ENCODE measurements at regions of chr3 and their contacts with region 1.

Region 1: GRCh38 chr3:157088601-157089454 is 71.1 kb downstream of the CCNL1 start:
- DNase-seq: peak; percentile 93 to 97
- ATAC-seq: peak; percentile 94
- H3K4me3 ChIP-seq: peak overlapping the region; percentile 52
- H3K27ac ChIP-seq: peak overlapping the region; percentile 93 to 98
- H3K4me1 ChIP-seq: peaks cover 23% of the 10 kb centered on the region
- CTCF ChIP-seq: no peak
- EP300 ChIP-seq: no peak
- POLR2A ChIP-seq: peak; percentile 84
- RAD21 ChIP-seq: no peak; a peak in 2 of 5 replicates

Region 2: DNA sequence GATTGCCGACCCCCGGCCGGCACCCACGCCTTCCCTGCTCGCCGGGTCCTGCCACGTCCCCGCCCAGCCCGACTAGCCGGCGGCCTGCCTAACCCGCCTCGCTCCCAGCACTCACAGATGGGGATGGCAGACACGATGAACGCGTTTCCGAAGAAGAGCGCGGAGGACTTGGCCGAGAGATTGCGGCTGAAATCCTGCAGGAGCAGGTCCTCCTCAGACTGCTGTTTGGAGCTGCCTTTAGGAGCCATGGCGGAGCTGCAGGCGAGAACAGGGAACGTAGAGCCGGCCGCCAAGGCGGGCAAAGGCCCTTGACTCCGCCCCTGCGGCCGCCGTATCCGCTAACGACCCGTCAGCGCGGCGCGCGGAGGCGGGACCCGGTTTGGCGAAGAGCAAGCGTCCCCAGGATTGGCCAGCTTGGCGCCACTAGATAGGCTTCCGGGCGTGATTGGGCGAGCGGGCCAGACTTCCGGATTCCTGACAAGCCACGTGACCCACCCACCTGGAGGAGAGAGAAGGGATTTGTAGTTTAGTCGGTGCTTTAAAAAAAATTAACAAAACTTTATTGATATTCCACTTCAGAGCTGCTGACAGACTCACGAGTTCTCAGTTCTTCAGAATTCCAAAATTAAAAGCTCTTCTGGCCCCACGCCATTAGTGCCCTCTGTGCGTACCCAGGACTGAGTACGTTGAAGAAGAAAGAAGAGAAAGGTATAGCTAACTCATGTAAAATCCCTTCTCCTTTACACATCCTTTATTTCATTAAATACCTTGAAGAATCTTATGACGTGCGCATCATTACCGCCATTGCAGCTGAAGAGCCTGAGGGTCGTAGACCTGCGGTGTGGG is 533.8 kb before region 1 on chr3 and contains the start of gene SSR3:
- CTCF ChIA-PET with region 1: interaction called, 3 read pairs
- POLR2A ChIA-PET with region 1: interaction called, 26 read pairs
- DNase-seq: peak; percentile 92 to 99
- ATAC-seq: peak; percentile 99 to 100
- H3K4me3 ChIP-seq: peak within 1 kb of the TSS; percentile 61
- H3K27ac ChIP-seq: peak within 1 kb of the TSS; percentile 83 to 93
- H3K4me1 ChIP-seq: peaks cover 16% of the 10 kb centered on the region; the same call in 2 of the 3 replicates
- CTCF ChIP-seq: no peak
- EP300 ChIP-seq: no peak
- POLR2A ChIP-seq: peak; percentile 76
- RAD21 ChIP-seq: no peak
- polyA plus RNA-seq, gene SSR3: 187 and 242 TPM in 2 replicates

Region 3: DNA sequence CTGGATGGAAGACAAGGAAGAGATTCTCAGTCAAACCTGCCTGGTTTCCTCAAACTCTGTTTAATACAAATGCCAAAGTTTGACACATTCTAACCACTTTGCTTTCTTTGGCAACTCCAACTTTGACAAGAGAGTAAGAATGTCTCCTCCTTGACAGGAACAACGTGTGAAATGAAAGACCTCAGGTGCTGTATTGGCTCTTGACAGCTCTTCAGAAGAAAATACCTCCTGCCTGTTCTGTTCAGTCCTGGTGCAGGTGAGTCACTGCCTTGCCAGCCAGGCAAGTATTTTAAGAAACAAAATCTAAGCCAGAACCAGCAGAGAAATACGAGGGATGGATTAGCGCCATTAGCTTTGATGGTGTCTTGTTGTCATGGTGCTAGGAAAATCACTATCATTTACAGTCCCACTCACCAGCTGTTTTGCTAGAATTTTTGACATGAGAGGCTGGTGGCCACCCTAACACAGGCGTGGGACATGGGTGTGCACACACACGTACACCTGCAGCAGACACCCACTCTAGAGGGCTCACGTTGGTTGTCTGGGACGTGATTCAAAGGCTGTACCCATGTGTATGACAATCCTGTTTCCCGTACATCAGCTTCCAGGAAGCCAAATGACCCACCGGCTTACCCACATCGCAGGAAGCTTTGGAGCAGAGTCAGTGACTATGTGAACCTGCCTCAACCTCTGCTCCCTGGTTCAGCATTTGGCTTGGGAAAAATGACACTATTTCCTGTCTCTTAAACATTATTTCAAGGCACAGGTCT is 10.7 kb after region 1 on chr3:
- CTCF ChIA-PET with region 1: interaction called, 13 read pairs
- POLR2A ChIA-PET with region 1: interaction called, 13 read pairs
- DNase-seq: no peak
- ATAC-seq: no peak
- H3K4me3 ChIP-seq: no peak overlapping the region
- H3K27ac ChIP-seq: no peak overlapping the region
- H3K4me1 ChIP-seq: peaks cover 4% of the 10 kb centered on the region; the same call in 1 of the 3 replicates
- CTCF ChIP-seq: no peak
- EP300 ChIP-seq: no peak
- POLR2A ChIP-seq: no peak
- RAD21 ChIP-seq: no peak

Region 4: DNA sequence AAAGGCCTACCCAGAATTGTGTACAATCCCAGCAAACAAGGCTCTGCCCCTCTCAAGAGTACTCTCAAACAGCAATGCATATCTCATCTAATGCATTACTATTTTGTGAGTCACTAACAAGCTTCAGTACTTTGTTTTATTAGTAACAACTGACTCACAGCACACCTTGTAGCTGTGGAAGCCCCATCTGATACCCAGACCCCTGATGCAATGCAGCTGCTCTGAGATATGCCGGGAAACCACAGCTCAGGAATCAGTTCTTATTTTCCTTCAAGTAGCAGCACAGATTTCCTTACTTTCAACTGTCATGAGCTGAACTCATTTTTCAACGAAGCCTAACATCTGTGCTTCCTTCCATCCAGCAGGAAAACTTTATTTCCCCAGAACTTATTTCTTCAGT is 33.3 kb after region 1 on chr3:
- CTCF ChIA-PET with region 1: interaction called, 72 read pairs
- POLR2A ChIA-PET with region 1: interaction called, 69 read pairs
- DNase-seq: peak; percentile 39 to 60
- ATAC-seq: peak; percentile 79 to 80
- H3K4me3 ChIP-seq: no peak overlapping the region
- H3K27ac ChIP-seq: peak overlapping the region; percentile 59 to 64; a peak in 4 of 6 replicates
- H3K4me1 ChIP-seq: peaks cover 51% of the 10 kb centered on the region
- CTCF ChIP-seq: no peak
- EP300 ChIP-seq: no peak
- POLR2A ChIP-seq: no peak
- RAD21 ChIP-seq: no peak

Region 5: GRCh38 chr3:157130467-157131251 is 41.8 kb after region 1 on chr3:
- CTCF ChIA-PET with region 1: interaction called, 72 read pairs
- POLR2A ChIA-PET with region 1: interaction called, 69 read pairs
- DNase-seq: peak; percentile 75 to 85
- ATAC-seq: peak; percentile 60 to 68
- H3K4me3 ChIP-seq: peak overlapping the region; percentile 2; the same call in 1 of the 3 replicates
- H3K27ac ChIP-seq: peak overlapping the region; percentile 77 to 80
- H3K4me1 ChIP-seq: peaks cover 66% of the 10 kb centered on the region
- CTCF ChIP-seq: peak; percentile 83
- EP300 ChIP-seq: peak in 1 of 2 experiments; percentile 44; a peak in 1 of 5 replicates
- POLR2A ChIP-seq: no peak
- RAD21 ChIP-seq: peak; percentile 77 to 87

Region 6: GRCh38 chr3:157159762-157160657 is 71.2 kb after region 1 on chr3 and contains the start of gene CCNL1:
- CTCF ChIA-PET with region 1: interaction called, 4 read pairs
- POLR2A ChIA-PET with region 1: interaction called, 16 read pairs
- DNase-seq: peak; percentile 83 to 99
- ATAC-seq: peak; percentile 92 to 93
- H3K4me3 ChIP-seq: peak within 1 kb of the TSS; percentile 96
- H3K27ac ChIP-seq: peak within 1 kb of the TSS; percentile 98 to 99
- H3K4me1 ChIP-seq: peaks cover 40% of the 10 kb centered on the region
- CTCF ChIP-seq: no peak
- EP300 ChIP-seq: no peak
- POLR2A ChIP-seq: peak; percentile 95
- RAD21 ChIP-seq: no peak
- polyA plus RNA-seq, gene CCNL1: 130 and 170 TPM in 2 replicates

Region 7: GRCh38 chr3:157226173-157226847 is 137.5 kb after region 1 on chr3:
- CTCF ChIA-PET with region 1: no interaction called
- POLR2A ChIA-PET with region 1: no interaction called
- DNase-seq: no peak
- ATAC-seq: no peak
- H3K4me3 ChIP-seq: no peak overlapping the region
- H3K27ac ChIP-seq: no peak overlapping the region
- H3K4me1 ChIP-seq: 0 out of 3 replicates have a peak, but pooled peaks cover 3% of the 10 kb centered on the region
- CTCF ChIP-seq: no peak
- EP300 ChIP-seq: no peak
- POLR2A ChIP-seq: no peak
- RAD21 ChIP-seq: no peak

Region 8: DNA sequence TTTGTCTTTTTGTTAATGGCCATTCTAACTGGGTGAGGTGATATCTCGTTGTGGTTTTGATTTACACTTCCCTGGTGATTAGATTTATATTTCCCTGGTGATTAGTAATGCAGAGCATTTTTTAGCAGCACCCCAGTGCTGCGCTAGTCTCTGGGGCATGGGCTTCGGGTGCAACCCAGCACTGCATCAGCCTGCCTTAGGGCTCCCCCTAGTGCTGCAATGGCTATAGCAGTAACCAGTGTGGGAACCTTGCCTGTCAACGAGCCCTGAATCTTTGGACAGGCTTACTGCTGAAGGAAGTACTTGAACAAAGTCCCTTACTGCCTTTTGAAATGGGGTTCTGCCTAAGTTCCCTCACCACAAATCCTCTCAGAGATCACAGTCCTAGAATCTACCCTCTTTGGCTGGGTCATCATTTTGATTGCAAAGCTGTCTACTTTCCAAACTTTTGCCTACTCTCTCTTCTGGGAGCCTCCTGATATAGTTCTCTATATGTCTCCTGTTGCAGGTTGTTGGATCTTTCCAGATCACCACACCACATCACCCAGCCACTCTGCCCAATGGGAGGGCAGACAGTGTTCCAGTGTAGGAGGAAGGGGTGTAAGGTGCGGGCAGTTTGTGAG is 150.4 kb after region 1 on chr3:
- CTCF ChIA-PET with region 1: no interaction called
- POLR2A ChIA-PET with region 1: no interaction called
- DNase-seq: peak; percentile 60
- ATAC-seq: peak; percentile 99 to 100
- H3K4me3 ChIP-seq: no peak overlapping the region
- H3K27ac ChIP-seq: no peak overlapping the region
- H3K4me1 ChIP-seq: no peaks in the 10 kb centered on the region
- CTCF ChIP-seq: peak; percentile 77
- EP300 ChIP-seq: no peak
- POLR2A ChIP-seq: no peak
- RAD21 ChIP-seq: peak; percentile 68 to 78

Measured in A549 (cell line).